ENCODE measurements at regions of chr9 and their contacts with region 1.

Region 1: DNA sequence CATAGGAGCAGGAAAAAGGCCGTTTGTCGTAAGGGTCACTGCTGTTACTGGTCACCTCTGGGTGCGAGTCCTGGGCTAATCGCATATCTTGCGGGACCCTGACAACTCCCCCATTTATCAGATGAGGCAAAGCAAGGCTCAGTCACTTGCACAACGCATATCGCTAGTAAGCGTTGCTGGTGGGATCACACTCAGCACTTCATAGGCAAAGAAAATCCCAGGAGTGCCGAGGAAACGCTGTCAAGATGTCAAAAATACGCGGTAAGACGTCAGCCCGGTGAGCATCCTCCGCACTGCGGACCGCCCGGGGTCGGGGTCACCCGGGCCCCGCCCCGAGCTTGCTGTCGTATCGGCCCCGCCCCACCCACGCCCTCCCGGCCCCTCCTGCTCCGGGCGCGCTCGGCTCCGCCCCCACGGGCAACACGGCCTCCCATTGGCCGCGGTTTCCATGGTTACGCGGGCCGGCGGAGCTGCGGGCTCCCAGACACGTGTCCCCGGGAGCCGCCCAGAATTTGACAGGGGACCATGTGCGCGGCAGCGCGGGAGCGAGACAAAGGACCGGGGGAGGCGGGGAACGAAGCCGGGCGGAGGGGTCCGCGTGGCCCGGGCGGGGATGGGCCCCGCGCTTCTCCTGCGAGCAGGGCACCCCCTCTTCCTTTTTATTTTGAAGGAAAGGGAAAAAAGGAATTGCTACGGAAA is 80.2 kb upstream of the IER5L start:
- DNase-seq: peak; percentile 90 to 94
- H3K4me3 ChIP-seq: peak overlapping the region; percentile 20 to 39
- H3K27ac ChIP-seq: peak overlapping the region; percentile 25 to 62
- H3K4me1 ChIP-seq: peaks cover 0 to 50% (median 32%) of the 10 kb centered on the region in 4 donors
- H3K27me3 ChIP-seq: no peaks in the 10 kb centered on the region
- CTCF ChIP-seq: no peak

Region 2: GRCh38 chr9:129202613-129203555 is 55.4 kb before region 1 on chr9:
- intact Hi-C with region 1: loop called (anchors 10 kb)
- DNase-seq: peak; percentile 85 to 90
- H3K4me3 ChIP-seq: peak overlapping the region; percentile 60 to 71
- H3K27ac ChIP-seq: peak overlapping the region; percentile 92 to 93
- H3K4me1 ChIP-seq: peaks cover 4 to 21% (median 14%) of the 10 kb centered on the region in 4 donors
- H3K27me3 ChIP-seq: no peaks in the 10 kb centered on the region
- CTCF ChIP-seq: no peak

Region 3: GRCh38 chr9:129320575-129321263 is 62.4 kb after region 1 on chr9:
- intact Hi-C with region 1: loop called (anchors 10 kb)
- DNase-seq: peak; percentile 82 to 88
- H3K4me3 ChIP-seq: peak overlapping the region; percentile 49 to 56
- H3K27ac ChIP-seq: peak overlapping the region; percentile 90 to 93
- H3K4me1 ChIP-seq: peaks cover 13 to 90% (median 82%) of the 10 kb centered on the region in 4 donors
- H3K27me3 ChIP-seq: no peaks in the 10 kb centered on the region
- CTCF ChIP-seq: no peak

Region 4: GRCh38 chr9:129413537-129414376 is 155.5 kb after region 1 on chr9:
- intact Hi-C with region 1: no loop called
- DNase-seq: peak; percentile 99 to 100
- H3K4me3 ChIP-seq: peak overlapping the region; percentile 56 to 61
- H3K27ac ChIP-seq: peak overlapping the region; percentile 97 to 100
- H3K4me1 ChIP-seq: peaks cover 0 to 34% (median 27%) of the 10 kb centered on the region in 4 donors
- H3K27me3 ChIP-seq: no peaks in the 10 kb centered on the region
- CTCF ChIP-seq: no peak

Region 5: DNA sequence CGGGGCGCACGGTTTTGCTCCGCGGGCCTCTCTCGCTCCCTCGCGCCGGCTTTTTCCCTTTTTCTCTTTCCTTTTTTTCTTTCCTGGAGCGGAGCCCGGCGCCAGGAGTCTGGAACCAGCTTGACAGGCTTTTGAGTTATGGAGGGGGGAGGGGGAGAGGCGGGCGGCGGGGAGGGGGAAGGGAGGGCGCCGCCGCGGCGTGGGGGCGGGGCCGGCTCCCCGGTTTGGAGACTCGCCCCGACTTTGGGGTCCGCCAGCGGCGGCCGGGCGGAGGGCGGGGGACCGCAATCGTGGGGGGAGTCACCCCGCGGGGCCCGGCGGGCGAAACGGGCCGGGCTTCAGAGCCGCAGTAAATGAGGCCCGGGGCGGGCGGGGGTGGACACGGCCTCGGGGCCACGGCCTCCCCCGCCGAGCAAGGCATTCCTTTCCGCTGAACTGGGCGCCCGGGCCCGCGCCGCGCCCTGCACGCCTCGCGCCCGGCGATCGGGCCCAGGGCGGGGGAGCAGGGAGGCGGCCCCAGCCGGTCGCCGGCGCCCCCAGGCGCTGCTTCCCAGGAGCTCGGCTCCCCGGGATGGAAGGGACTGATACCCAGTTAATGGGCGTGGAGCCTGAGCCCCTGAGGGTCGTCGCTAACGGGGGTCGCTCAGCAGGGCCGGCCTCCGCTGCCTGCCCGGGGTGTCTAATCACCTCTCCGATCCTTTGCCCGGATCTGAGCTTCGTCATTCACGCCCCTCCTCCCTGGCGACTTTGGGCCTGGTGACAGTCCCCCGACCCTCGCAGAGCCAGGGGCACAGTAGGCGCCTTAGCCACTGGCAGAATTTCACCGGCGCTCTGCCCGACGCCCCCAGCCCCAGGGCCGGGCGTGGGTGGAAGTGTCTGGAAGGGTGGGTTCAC is 224.5 kb after region 1 on chr9:
- intact Hi-C with region 1: loop called (anchors 10 kb)
- DNase-seq: peak; percentile 94 to 96
- H3K4me3 ChIP-seq: peak overlapping the region; percentile 53 to 63
- H3K27ac ChIP-seq: peak overlapping the region; percentile 100
- H3K4me1 ChIP-seq: peaks cover 0 to 80% (median 71%) of the 10 kb centered on the region in 4 donors
- H3K27me3 ChIP-seq: no peaks in the 10 kb centered on the region
- CTCF ChIP-seq: peak in 1 of 2 experiments; percentile 8

Measured in tibial artery (tissue), 4 donors.